Panc1 (cell line): ENCODE measurements at regions of chr5 and their contacts with region 1.

Region 1: DNA sequence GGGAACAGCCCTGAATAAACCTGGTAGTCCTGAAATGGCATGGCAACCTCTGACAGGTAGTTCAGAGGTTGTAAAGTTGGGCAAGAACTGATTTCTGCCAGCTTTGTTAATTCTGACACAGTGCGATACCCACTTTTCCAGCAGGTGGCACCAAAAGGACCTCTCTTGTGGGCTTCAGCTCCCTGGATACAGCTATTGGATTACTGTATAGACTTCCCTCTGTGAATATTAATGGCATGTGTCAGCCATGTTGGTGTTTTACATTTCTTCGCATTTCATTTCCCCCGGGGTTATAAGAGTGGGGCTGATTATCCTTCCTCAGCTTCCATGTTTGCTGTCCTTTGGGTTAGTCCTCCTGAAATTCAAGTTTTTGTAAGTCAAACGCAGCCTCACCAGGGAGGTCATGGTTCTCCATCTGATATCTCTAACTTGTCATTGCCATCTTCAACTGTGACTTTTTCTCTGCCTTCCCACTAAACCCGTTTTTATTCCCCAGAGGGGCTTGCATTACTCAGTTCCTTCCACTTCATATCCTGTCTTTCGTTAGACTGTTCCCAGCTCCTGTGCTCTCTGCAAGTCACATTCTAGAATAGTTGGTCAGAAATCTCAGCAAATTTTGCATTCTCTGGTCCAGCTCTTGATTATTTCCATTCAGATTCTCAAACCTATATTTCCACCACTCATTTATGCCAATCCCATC is 135.6 kb downstream of the LIFR start:
- DNase-seq: peak; percentile 63
- ATAC-seq: peak; percentile 93
- H3K4me3 ChIP-seq: no peak overlapping the region
- H3K27ac ChIP-seq: no peak overlapping the region
- H3K4me1 ChIP-seq: no peaks in the 10 kb centered on the region
- H3K27me3 ChIP-seq: no peaks in the 10 kb centered on the region; the same call in 1 of the 2 replicates
- CTCF ChIP-seq: peak; percentile 90

Region 2: DNA sequence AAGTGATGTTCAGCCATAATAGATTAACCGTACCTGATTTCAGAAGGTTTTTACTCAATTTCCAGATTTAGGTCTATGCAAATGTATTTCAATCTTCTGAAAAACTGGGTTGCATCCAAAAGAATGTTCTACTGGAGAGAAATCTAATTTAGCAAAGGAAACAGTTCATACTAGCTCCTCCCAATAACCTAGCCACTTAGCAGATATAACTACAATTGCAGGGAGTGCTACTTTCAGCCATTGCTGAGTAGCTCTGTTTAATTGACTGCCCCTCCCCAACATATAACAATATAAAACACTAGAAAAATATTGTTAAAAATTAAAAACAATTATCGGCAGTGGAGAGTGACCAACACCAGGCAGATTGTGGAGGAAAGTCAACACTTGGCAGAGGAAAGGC is 417.1 kb after region 1 on chr5:
- CTCF ChIA-PET with region 1: no interaction called
- POLR2A ChIA-PET with region 1: interaction called, 11 read pairs
- in situ Hi-C with region 1: no loop called
- intact Hi-C with region 1: no loop called
- DNase-seq: no peak
- ATAC-seq: no peak
- H3K4me3 ChIP-seq: no peak overlapping the region
- H3K27ac ChIP-seq: no peak overlapping the region
- H3K4me1 ChIP-seq: no peaks in the 10 kb centered on the region; the same call in 1 of the 2 replicates
- H3K27me3 ChIP-seq: no peaks in the 10 kb centered on the region
- CTCF ChIP-seq: no peak